Caco-2 (cell line): ENCODE measurements at regions of chr3 and their contacts with region 1.

Region 1: DNA sequence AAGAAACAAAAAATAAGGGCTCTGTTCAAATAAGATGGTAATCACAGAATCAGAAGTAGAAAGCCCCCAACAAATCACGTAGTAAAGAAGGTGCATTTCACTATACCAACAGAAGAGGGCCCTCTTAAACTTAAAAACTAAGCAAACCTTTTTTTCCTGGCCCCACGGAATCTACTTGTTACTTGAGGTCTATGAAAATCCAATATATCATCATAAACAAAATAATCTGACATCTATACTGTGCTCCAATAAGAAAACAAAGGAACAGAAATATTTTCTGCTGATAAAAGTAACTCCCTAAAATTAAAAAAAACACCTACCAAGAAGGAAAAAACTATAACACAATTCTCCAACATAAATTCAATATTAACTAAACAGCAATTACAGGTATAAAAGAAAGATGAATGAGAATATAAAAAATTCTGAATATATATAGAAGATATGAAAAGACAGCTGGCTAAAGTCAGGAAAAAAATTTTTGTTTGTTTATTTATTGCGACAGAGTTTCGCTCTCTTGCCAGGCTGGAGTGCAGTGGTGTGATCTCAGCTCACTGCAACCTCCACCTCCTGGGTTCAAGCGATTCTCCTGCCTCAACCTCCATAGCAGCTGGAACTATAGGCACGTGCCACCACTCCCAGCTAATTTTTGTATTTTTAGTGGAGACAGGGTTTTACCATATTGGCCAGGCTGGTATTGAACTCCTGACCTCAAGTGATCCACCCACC is 81.8 kb downstream of the CLASP2 start:
- DNase-seq: peak in 1 of 2 experiments; percentile 19
- H3K4me3 ChIP-seq: no peak overlapping the region
- H3K4me3 Mint-ChIP-seq: no peak overlapping the region
- H3K27ac Mint-ChIP-seq: no peak overlapping the region
- H3K4me1 ChIP-seq: peaks cover 20% of the 10 kb centered on the region
- H3K4me1 Mint-ChIP-seq: peaks cover 6% of the 10 kb centered on the region
- H3K27me3 ChIP-seq: no peaks in the 10 kb centered on the region
- H3K27me3 Mint-ChIP-seq: no peaks in the 10 kb centered on the region
- CTCF ChIP-seq: peak; percentile 39 to 48

Region 2: GRCh38 chr3:33664195-33664594 is 27.9 kb after region 1 on chr3:
- CTCF ChIA-PET with region 1: no interaction called
- POLR2A ChIA-PET with region 1: no interaction called
- intact Hi-C with region 1: no loop called
- DNase-seq: no peak
- H3K4me3 ChIP-seq: no peak overlapping the region
- H3K4me3 Mint-ChIP-seq: no peak overlapping the region
- H3K27ac Mint-ChIP-seq: no peak overlapping the region
- H3K4me1 ChIP-seq: no peaks in the 10 kb centered on the region; the same call in 1 of the 2 replicates
- H3K4me1 Mint-ChIP-seq: no peaks in the 10 kb centered on the region
- H3K27me3 ChIP-seq: no peaks in the 10 kb centered on the region
- H3K27me3 Mint-ChIP-seq: no peaks in the 10 kb centered on the region
- CTCF ChIP-seq: no peak

Region 3: DNA sequence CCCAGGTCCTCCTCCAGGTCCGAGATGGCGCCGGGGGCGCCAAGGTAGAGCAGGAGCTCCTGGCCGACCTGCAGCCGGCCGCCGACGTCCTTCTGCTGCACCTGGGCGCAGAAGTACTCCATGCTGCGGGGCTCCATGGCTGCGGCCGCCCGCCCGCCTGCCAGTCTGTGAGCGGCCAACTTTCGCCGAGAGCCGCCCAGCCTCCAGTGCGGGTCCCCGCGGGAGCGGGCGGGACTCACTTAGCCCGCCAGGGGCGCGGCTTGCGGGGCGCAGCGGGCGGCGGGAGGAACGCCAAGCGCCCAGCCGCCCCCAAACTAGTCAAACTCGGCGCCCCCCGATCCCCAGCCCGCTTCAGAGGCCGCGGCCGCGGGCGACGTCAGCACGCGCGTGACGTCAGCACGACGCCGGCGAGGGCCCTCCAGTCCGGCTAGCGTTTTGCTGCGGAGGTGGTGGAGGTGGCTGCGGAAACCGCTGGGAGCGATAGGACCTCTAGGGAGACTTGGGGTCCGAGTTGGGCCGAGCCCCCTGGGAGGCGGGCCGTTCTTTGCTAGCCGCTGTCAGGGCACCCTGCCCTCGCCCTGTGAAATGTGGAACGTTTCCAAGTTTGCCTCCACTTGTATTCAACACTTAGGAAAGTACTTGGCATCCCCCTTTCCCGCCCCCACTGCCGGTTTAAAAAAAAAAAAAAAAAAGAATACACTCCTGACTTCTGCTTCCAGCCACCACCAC is 81.7 kb after region 1 on chr3 and contains the start of gene CLASP2:
- CTCF ChIA-PET with region 1: no interaction called
- POLR2A ChIA-PET with region 1: no interaction called
- intact Hi-C with region 1: loop called (anchors 1 kb)
- DNase-seq: peak; percentile 89
- H3K4me3 ChIP-seq: peak within 1 kb of the TSS; percentile 90
- H3K4me3 Mint-ChIP-seq: no peak within 1 kb of the TSS
- H3K27ac Mint-ChIP-seq: no peak within 1 kb of the TSS
- H3K4me1 ChIP-seq: peaks cover 11% of the 10 kb centered on the region; the same call in 1 of the 2 replicates
- H3K4me1 Mint-ChIP-seq: no peaks in the 10 kb centered on the region
- H3K27me3 ChIP-seq: no peaks in the 10 kb centered on the region
- H3K27me3 Mint-ChIP-seq: no peaks in the 10 kb centered on the region
- CTCF ChIP-seq: no peak
- total RNA-seq, gene CLASP2: 65.6 and 66.3 TPM in 2 replicates

Region 4: GRCh38 chr3:33773637-33774036 is 137.3 kb after region 1 on chr3:
- CTCF ChIA-PET with region 1: interaction called, 3 read pairs
- POLR2A ChIA-PET with region 1: no interaction called
- intact Hi-C with region 1: loop called (anchors 1 kb)
- DNase-seq: no peak
- H3K4me3 ChIP-seq: no peak overlapping the region
- H3K4me3 Mint-ChIP-seq: no peak overlapping the region
- H3K27ac Mint-ChIP-seq: no peak overlapping the region
- H3K4me1 ChIP-seq: no peaks in the 10 kb centered on the region
- H3K4me1 Mint-ChIP-seq: no peaks in the 10 kb centered on the region
- H3K27me3 ChIP-seq: no peaks in the 10 kb centered on the region
- H3K27me3 Mint-ChIP-seq: no peaks in the 10 kb centered on the region
- CTCF ChIP-seq: no peak

Region 5: GRCh38 chr3:33954956-33955355 is 318.7 kb after region 1 on chr3:
- CTCF ChIA-PET with region 1: no interaction called
- POLR2A ChIA-PET with region 1: no interaction called
- intact Hi-C with region 1: no loop called
- DNase-seq: peak; percentile 38 to 39
- H3K4me3 ChIP-seq: no peak overlapping the region
- H3K4me3 Mint-ChIP-seq: no peak overlapping the region
- H3K27ac Mint-ChIP-seq: no peak overlapping the region
- H3K4me1 ChIP-seq: no peaks in the 10 kb centered on the region
- H3K4me1 Mint-ChIP-seq: no peaks in the 10 kb centered on the region
- H3K27me3 ChIP-seq: no peaks in the 10 kb centered on the region
- H3K27me3 Mint-ChIP-seq: peaks cover 11% of the 10 kb centered on the region
- CTCF ChIP-seq: peak; percentile 42 to 44